ENCODE measurements at regions of chr2 and their contacts with region 1.

Region 1: GRCh38 chr2:155393406-155393805 is 694.9 kb downstream of the KCNJ3 start:
- DNase-seq: no peak
- ATAC-seq: no peak
- H3K4me3 ChIP-seq: no peak overlapping the region
- H3K27ac ChIP-seq: no peak overlapping the region
- H3K4me1 ChIP-seq: no peaks in the 10 kb centered on the region
- H3K27me3 ChIP-seq: no peaks in the 10 kb centered on the region

Region 2: GRCh38 chr2:155961641-155962040 is 568.2 kb after region 1 on chr2:
- intact Hi-C with region 1: loop called in 1 of 4 experiments (anchors 5 kb)
- DNase-seq: no peak
- ATAC-seq: no peak
- H3K4me3 ChIP-seq: no peak overlapping the region
- H3K27ac ChIP-seq: no peak overlapping the region
- H3K4me1 ChIP-seq: no peaks in the 10 kb centered on the region
- H3K27me3 ChIP-seq: no peaks in the 10 kb centered on the region

Measured in right cardiac atrium (tissue), 5 donors.